MCF 10A (cell line): ENCODE measurements at regions of chr11 and their contacts with region 1.

Region 1: GRCh38 chr11:87391496-87391895 is 353.8 kb downstream of the TMEM135 start:
- DNase-seq: no peak
- H3K4me3 Mint-ChIP-seq: no peak overlapping the region
- H3K27ac Mint-ChIP-seq: no peak overlapping the region
- H3K4me1 Mint-ChIP-seq: no peaks in the 10 kb centered on the region
- H3K27me3 Mint-ChIP-seq: no peaks in the 10 kb centered on the region
- CTCF ChIP-seq: no peak

Region 2: DNA sequence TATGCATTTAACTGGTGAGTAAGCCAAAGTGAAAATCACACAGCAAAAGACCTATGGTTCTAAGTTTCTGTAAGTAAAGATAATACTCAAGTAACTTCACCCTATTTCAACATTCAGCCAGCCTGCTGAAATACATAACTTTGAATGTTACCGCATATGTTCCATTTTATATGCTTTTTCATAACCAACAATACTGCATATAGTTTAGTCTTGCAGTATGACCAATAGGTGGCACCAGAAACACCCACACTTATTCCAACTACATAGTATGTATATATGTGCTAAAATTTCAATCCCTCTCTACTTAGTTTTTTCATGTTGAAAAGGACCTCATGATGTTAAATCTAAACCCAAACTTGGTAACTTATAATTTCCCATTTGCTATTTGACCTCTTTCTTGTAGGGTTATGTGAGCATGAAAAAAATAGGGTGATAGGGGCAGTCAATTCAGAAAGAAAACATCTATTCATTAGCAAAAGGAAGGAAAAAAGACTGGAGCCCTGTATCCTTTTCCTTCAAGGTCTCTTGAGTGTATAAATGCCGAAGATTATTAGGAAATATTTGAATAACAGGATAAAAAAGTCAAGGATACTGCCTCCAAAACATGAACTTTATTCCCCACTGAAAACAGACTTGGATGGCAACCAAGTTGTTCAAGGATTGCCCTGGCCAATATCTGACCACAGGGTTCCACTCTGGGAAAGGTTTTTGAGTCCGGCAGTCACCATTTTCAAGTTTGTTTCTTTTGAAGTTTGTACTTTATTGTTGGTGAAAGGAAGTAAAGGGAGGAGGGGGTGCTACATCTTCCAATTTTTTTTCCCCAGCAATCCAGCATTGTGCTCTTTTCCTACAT is 412.5 kb before region 1 on chr11:
- CTCF ChIA-PET with region 1: no interaction called
- POLR2A ChIA-PET with region 1: no interaction called
- intact Hi-C with region 1: loop called (anchors 5 kb)
- DNase-seq: peak; percentile 60
- H3K4me3 Mint-ChIP-seq: no peak overlapping the region
- H3K27ac Mint-ChIP-seq: no peak overlapping the region
- H3K4me1 Mint-ChIP-seq: peaks cover 12% of the 10 kb centered on the region
- H3K27me3 Mint-ChIP-seq: no peaks in the 10 kb centered on the region
- CTCF ChIP-seq: peak; percentile 66